Head of caudate nucleus (tissue), 42 donors: ENCODE measurements at regions of chr2 and their contacts with region 1.

Region 1: GRCh38 chr2:181949047-181949446 is 36.6 kb upstream of the PPP1R1C start:
- DNase-seq: no peak

Region 2: DNA sequence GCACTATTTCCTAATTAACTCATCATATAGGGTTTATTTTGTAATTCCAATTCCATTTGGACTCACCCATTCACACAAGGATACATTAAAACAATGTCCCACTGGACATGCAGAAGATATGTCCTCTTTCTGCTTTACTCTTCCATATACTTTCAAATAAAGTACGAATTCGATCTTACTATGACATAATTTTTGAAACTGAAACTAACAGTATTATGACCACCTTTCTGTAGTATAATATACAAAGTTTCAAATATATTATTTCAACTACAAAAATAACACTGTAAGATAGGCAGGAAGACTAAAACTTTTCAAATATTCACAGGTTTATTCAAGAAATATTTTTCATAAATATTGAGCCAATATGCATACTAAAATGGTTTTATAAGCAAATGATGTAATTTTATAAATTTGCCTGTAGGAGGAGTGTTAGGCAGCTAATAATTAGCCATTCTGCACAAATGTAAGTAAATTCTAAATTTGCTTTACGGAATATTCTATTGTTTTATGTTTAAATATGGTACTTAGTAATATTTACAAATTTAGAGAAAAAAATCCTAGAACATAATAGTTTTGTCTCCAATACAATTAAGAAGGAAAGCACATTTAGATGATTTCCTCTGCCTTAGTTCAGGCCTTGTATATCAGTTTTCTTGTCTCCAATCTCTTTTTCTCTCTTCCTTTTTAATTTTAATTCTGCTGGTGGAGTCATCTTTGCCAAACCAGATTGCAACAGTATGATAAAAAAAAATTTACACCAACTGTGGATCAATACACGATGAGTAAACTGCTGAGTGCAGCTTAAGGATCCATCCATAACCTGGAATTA is 378.0 kb before region 1 on chr2:
- intact Hi-C with region 1: no loop called
- DNase-seq: no peak

Region 3: GRCh38 chr2:181677912-181678586 is 271.0 kb before region 1 on chr2:
- intact Hi-C with region 1: no loop called
- DNase-seq: peak in 30 of 42 donors; percentile 7 to 71 (median 39)

Region 4: GRCh38 chr2:181742922-181743722 is 205.9 kb before region 1 on chr2:
- intact Hi-C with region 1: loop called (anchors 10 kb)
- DNase-seq: peak in 30 of 42 donors; percentile 4 to 78 (median 38)